ENCODE measurements at regions of chr6 and their contacts with region 1.

Region 1: GRCh38 chr6:3125815-3126214 is 7.3 kb downstream of the BPHL start:
- DNase-seq: no peak
- H3K4me3 ChIP-seq: no peak overlapping the region
- H3K27ac ChIP-seq: no peak overlapping the region
- H3K4me1 ChIP-seq: no peaks in the 10 kb centered on the region
- H3K27me3 ChIP-seq: no peaks in the 10 kb centered on the region
- CTCF ChIP-seq: no peak

Region 2: DNA sequence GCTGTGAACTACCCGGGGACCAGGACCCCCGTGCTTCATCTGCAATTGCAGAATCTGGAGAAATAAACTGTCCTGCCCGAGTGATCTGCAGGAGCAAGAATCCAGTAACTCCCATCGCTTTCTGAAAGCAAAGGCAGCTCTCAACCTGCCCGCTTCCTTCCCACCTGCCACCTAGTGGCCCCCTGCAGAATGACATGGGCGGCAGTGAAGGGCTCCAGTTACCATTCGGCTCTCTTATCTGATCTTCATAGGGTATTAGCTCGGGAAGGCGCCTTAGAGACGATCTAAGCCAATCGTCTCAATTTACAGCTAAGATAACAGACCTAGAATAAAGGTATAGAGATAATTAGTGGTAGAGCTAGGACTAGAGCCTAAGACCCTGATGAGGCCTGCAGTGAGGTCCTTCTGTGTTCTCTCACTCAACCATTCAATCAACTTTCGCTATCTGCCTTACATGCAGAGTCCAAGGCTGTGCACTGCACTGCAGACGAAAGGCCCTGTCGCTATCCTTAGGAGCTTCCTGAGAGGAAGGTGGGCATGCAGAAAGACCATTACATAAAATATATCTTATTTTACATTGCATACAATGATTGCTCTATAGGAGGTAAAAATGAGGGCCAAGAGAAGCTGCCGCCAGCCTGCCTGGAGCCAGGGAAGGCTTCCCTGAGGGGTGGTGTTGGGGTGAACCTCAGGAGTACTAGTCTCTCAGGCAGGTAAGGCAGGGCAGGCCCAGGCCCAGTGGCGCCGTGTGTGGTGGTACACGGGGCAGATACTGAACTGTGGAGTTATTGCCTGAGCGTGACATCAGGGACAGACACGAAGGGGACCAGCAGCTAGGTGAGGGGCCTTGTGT is 125.9 kb after region 1 on chr6:
- intact Hi-C with region 1: loop called (anchors 1 kb)
- DNase-seq: peak in 1 of 2 donors; percentile 91
- H3K4me3 ChIP-seq: no peak overlapping the region
- H3K27ac ChIP-seq: no peak overlapping the region
- H3K4me1 ChIP-seq: peaks cover 0 to 4% of the 10 kb centered on the region in 2 donors
- H3K27me3 ChIP-seq: no peaks in the 10 kb centered on the region
- CTCF ChIP-seq: peak; percentile 89 to 97 (median 96)

Region 3: DNA sequence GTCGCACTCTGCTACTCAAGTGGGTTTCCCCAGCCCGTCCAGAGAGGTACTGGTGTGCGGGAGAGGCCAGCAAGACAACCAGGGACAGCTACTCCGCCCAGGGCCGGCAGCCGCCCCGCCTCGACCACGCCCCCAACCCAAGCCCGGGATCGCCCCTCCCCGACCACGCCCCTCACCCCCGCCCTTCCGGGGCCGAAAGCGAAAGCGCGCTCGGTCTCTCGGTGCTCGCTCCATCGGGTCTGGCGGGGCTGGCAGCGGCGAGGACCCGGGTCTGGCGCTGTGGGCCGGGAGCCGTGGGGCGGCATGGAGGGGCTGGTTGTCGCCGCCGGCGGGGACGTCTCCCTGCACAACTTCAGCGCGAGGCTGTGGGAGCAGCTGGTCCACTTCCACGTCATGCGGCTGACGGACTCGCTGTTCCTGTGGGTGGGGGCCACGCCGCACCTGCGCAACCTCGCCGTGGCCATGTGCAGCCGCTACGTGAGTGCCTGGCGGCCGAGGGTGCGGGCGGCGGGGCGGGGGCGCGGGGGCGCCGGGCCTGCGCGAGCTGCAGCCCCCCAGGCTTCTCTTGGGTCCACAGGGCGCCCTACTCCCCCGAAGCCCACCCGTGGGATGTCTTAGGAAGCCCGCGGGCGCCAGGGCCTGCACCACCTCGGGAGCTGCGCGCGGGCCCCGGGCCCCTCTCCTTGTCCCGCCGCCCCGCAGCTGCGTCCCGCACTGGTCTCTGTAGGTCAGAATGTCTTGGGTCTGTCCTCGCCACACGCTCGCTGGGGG is 133.1 kb after region 1 on chr6 and contains the start of gene PSMG4:
- intact Hi-C with region 1: loop called (anchors 2 kb)
- DNase-seq: peak; percentile 65 to 96
- H3K4me3 ChIP-seq: peak within 1 kb of the TSS; percentile 69 to 83
- H3K27ac ChIP-seq: peak within 1 kb of the TSS; percentile 44 to 60
- H3K4me1 ChIP-seq: peaks cover 3 to 15% of the 10 kb centered on the region in 2 donors
- H3K27me3 ChIP-seq: no peaks in the 10 kb centered on the region
- CTCF ChIP-seq: no peak
- total RNA-seq, gene PSMG4: 23.9 TPM

Region 4: GRCh38 chr6:3356056-3356761 is 230.4 kb after region 1 on chr6:
- intact Hi-C with region 1: loop called (anchors 10 kb)
- DNase-seq: peak; percentile 27 to 88
- H3K4me3 ChIP-seq: peak overlapping the region; percentile 37 to 59
- H3K27ac ChIP-seq: peak overlapping the region; percentile 86 to 89
- H3K4me1 ChIP-seq: peaks cover 3 to 7% of the 10 kb centered on the region in 2 donors
- H3K27me3 ChIP-seq: no peaks in the 10 kb centered on the region
- CTCF ChIP-seq: no peak

Region 5: DNA sequence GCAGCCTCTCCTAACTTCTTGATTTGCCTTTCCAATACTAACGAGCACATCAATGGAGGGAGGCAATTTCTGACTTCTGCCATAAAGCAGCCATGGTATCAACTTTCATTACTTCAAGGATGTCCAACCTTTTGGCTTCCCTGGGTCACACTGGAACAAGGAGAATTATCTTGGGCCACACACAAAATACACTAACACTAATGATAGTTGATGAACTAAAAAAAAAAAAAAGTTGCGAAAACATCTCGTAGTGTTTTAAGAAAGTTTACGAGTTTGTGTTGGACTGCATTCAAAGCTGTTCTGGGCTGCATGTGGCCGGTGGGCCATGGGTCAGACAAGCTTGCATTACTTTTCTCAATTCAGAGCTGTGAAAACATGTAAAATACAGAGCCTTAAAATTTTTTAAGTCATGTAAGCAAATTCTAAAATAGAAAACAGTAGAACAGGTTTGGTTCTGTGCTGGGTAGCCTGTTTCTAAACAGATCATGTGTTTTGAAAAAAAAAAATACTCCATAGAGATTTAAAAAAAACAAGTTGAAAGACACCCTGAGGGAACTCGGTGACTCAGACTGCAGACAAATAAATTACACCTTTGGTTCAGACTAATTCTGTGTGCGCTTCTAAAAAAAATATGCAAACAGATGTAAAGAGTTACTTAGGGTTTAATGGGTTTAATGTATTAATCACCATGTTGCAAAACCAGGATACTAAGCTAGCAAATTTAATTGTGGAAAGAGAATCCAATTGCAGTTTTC is 374.6 kb after region 1 on chr6:
- intact Hi-C with region 1: no loop called
- DNase-seq: no peak
- H3K4me3 ChIP-seq: no peak overlapping the region
- H3K27ac ChIP-seq: no peak overlapping the region
- H3K4me1 ChIP-seq: no peaks in the 10 kb centered on the region
- H3K27me3 ChIP-seq: no peaks in the 10 kb centered on the region
- CTCF ChIP-seq: no peak

Measured in ascending aorta (tissue), 2 donors.